ENCODE measurements at regions of chr19 and their contacts with region 1.

Region 1: GRCh38 chr19:44500148-44500956 is at the start of gene ZNF180:
- DNase-seq: peak; percentile 91
- H3K4me3 Mint-ChIP-seq: peak within 1 kb of the TSS; percentile 91
- H3K27ac Mint-ChIP-seq: peak within 1 kb of the TSS; percentile 87
- H3K4me1 Mint-ChIP-seq: peaks cover 21% of the 10 kb centered on the region
- H3K27me3 Mint-ChIP-seq: no peaks in the 10 kb centered on the region
- total RNA-seq, gene ZNF180: 7.3 and 8.3 TPM in 2 replicates

Region 2: GRCh38 chr19:43619262-43620060 is 880.9 kb before region 1 on chr19 and contains the start of gene ZNF428:
- intact Hi-C with region 1: loop called (anchors 5 kb)
- DNase-seq: peak; percentile 86
- H3K4me3 Mint-ChIP-seq: peak within 1 kb of the TSS; percentile 90
- H3K27ac Mint-ChIP-seq: peak within 1 kb of the TSS; percentile 96
- H3K4me1 Mint-ChIP-seq: peaks cover 18% of the 10 kb centered on the region
- H3K27me3 Mint-ChIP-seq: no peaks in the 10 kb centered on the region
- total RNA-seq, gene ZNF428: 17.7 and 19.1 TPM in 2 replicates

Region 3: GRCh38 chr19:43826787-43827754 is 673.3 kb before region 1 on chr19 and contains the start of gene ZNF283:
- intact Hi-C with region 1: loop called (anchors 1 kb)
- DNase-seq: peak; percentile 74
- H3K4me3 Mint-ChIP-seq: peak within 1 kb of the TSS; percentile 88
- H3K27ac Mint-ChIP-seq: peak within 1 kb of the TSS; percentile 54
- H3K4me1 Mint-ChIP-seq: peaks cover 17% of the 10 kb centered on the region
- H3K27me3 Mint-ChIP-seq: peaks cover 1% of the 10 kb centered on the region
- total RNA-seq, gene ZNF283: 3.6 and 4.6 TPM in 2 replicates

Region 4: GRCh38 chr19:44113138-44113783 is 387.1 kb before region 1 on chr19 and contains the start of gene ZNF225:
- intact Hi-C with region 1: loop called (anchors 10 kb)
- DNase-seq: peak; percentile 81
- H3K4me3 Mint-ChIP-seq: peak within 1 kb of the TSS; percentile 99
- H3K27ac Mint-ChIP-seq: peak within 1 kb of the TSS; percentile 82
- H3K4me1 Mint-ChIP-seq: peaks cover 14% of the 10 kb centered on the region
- H3K27me3 Mint-ChIP-seq: no peaks in the 10 kb centered on the region
- total RNA-seq, gene ZNF225: 3.5 and 3.6 TPM in 2 replicates

Region 5: DNA sequence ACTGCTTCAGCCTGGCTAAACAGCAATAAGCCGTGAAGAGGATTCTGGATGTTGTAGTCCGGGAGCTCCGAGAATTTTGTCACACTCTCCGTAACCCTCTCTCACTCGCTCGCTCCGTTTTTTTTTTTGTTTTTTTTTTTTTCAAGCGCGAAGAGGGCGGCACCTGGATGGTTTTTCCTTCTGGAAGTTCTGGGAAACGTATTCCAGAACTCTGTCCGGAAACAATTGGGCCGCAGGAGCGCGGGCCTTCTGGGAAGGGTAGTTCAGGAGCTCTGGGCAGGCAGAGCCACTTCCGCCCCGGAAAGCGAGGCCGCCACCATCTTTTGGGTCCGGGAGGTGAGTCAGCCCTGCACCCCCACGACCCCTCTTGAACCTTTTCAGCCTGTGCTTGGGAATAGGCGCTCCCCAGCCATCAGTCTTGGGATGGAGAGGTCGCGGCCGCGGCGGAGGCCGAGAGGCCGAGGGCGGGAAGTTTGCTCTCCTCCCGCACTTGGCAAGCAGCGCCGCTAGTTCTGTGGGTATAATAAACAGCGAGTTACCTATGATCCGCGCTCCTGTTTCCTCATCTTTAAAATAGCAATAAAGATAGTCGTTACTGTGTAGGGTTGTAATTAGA is 288.0 kb before region 1 on chr19 and contains the start of gene ZNF227:
- intact Hi-C with region 1: loop called (anchors 1 kb)
- DNase-seq: peak; percentile 70
- H3K4me3 Mint-ChIP-seq: peak within 1 kb of the TSS; percentile 92
- H3K27ac Mint-ChIP-seq: peak within 1 kb of the TSS; percentile 85
- H3K4me1 Mint-ChIP-seq: peaks cover 16% of the 10 kb centered on the region
- H3K27me3 Mint-ChIP-seq: no peaks in the 10 kb centered on the region
- total RNA-seq, gene ZNF227: 17.6 and 17.7 TPM in 2 replicates

Region 6: DNA sequence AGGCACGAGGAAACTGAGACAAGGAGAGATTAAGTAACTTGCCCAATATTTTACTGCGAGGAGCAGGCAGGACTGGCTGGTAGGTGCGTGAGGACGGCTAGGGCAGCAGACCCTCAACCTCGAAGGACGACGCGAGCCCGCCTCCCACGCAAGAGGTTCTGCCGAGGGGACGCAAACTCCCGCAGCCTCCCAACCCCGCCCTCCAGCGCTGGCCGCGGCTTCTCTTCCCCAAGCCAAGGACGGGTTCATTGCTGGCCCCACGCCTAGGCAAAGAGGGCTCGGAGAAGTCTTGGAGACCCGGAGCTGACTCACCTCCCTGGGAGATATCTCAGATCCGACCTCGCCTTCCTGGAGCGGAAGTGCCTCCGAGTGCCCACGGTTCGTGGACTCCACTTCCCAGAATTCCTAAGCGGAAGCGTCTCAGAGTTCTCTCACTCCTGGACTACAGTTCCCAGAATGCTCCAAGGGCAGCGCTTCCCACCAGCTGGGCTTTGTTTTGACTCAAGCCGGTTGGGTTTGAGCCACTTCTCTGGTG is 195.6 kb before region 1 on chr19 and contains the start of gene ZNF235:
- intact Hi-C with region 1: loop called (anchors 5 kb)
- DNase-seq: peak; percentile 58
- H3K4me3 Mint-ChIP-seq: peak within 1 kb of the TSS; percentile 88
- H3K27ac Mint-ChIP-seq: no peak within 1 kb of the TSS
- H3K4me1 Mint-ChIP-seq: peaks cover 14% of the 10 kb centered on the region
- H3K27me3 Mint-ChIP-seq: no peaks in the 10 kb centered on the region
- total RNA-seq, gene ZNF235: 2.7 and 3.1 TPM in 2 replicates

Region 7: GRCh38 chr19:44476559-44477408 is 23.6 kb before region 1 on chr19:
- intact Hi-C with region 1: loop called (anchors 1 kb)
- DNase-seq: no peak
- H3K4me3 Mint-ChIP-seq: no peak overlapping the region
- H3K27ac Mint-ChIP-seq: no peak overlapping the region
- H3K4me1 Mint-ChIP-seq: no peaks in the 10 kb centered on the region
- H3K27me3 Mint-ChIP-seq: no peaks in the 10 kb centered on the region